ENCODE measurements at regions of chr4 and their contacts with region 1.

Region 1: DNA sequence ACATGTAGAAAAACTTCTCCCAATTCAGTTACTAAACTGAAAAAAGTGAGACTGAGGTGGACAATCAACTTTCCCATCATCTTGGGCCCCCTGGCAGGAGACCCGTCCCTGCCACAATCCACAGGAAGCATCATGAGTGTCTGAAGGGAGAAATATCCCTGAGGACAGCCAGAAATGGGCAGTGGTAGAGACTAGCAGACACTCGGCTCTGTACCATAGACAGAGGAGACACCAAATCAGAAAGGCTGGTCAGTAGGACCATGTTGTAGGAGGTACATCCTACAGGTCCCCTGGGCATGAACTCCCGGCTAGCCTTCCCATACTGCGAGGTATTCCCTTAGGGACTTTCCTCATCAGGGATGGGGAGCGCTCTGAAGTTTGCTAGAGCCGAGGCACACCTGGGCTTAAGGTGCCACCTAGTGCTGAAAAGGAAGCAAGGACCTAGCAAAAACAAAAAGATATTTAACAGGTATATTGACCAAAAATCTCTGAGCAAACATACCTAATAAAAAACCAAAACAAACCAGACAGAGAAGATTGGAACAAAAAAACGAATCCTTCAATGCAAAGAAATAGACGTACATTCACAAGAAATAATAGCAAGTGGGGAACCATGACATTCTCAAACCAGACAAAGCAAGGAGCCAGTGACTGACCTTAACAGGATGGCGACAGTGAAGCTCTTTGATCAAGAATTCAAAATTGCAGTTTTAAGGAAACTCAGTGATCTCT is 55.6 kb downstream of the HAUS3 start:
- DNase-seq: peak; percentile 49 to 58
- H3K4me3 ChIP-seq: no peak overlapping the region
- H3K4me3 Mint-ChIP-seq: no peak overlapping the region
- H3K27ac Mint-ChIP-seq: no peak overlapping the region
- H3K4me1 ChIP-seq: no peaks in the 10 kb centered on the region
- H3K4me1 Mint-ChIP-seq: no peaks in the 10 kb centered on the region
- H3K27me3 ChIP-seq: no peaks in the 10 kb centered on the region
- H3K27me3 Mint-ChIP-seq: no peaks in the 10 kb centered on the region
- CTCF ChIP-seq: peak; percentile 63

Region 2: DNA sequence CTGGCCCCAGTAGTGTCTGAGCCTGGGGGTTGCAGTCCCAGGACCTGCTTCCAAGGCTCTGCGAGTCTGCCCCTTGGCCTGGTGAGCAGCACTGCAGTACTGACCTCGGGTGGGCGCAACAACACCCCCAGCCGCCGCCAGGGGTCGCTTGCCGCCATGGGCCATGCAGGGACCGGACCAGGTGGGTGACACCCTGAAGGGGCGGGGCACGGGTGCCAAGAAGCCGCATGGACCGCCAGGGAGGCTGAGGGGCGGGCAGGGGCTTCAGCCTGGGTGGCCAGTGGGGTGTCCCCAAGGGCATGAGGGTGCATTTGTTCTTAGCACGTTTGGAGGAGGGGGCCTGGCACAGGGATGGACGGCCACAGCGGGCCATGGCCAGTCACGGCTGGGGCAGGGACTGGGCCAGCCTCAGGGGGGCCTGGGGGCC is 440.0 kb before region 1 on chr4:
- CTCF ChIA-PET with region 1: no interaction called
- POLR2A ChIA-PET with region 1: no interaction called
- intact Hi-C with region 1: loop called (anchors 5 kb)
- DNase-seq: peak; percentile 80 to 89
- H3K4me3 ChIP-seq: no peak overlapping the region
- H3K4me3 Mint-ChIP-seq: no peak overlapping the region
- H3K27ac Mint-ChIP-seq: no peak overlapping the region
- H3K4me1 ChIP-seq: 0 out of 2 replicates have a peak, but pooled peaks cover 5% of the 10 kb centered on the region
- H3K4me1 Mint-ChIP-seq: no peaks in the 10 kb centered on the region
- H3K27me3 ChIP-seq: no peaks in the 10 kb centered on the region
- H3K27me3 Mint-ChIP-seq: no peaks in the 10 kb centered on the region
- CTCF ChIP-seq: peak; percentile 66 to 85

Region 3: GRCh38 chr4:1910643-1911042 is 275.7 kb before region 1 on chr4:
- CTCF ChIA-PET with region 1: no interaction called
- POLR2A ChIA-PET with region 1: no interaction called
- intact Hi-C with region 1: loop called (anchors 1 kb)
- DNase-seq: peak in 1 of 2 experiments; percentile 67
- H3K4me3 ChIP-seq: no peak overlapping the region
- H3K4me3 Mint-ChIP-seq: no peak overlapping the region
- H3K27ac Mint-ChIP-seq: no peak overlapping the region
- H3K4me1 ChIP-seq: no peaks in the 10 kb centered on the region
- H3K4me1 Mint-ChIP-seq: peaks cover 23% of the 10 kb centered on the region
- H3K27me3 ChIP-seq: no peaks in the 10 kb centered on the region
- H3K27me3 Mint-ChIP-seq: no peaks in the 10 kb centered on the region
- CTCF ChIP-seq: peak; percentile 51 to 63

Region 4: GRCh38 chr4:1981251-1982058 is 204.8 kb before region 1 on chr4:
- CTCF ChIA-PET with region 1: no interaction called
- POLR2A ChIA-PET with region 1: no interaction called
- intact Hi-C with region 1: loop called (anchors 10 kb)
- DNase-seq: peak in 1 of 2 experiments; percentile 38
- H3K4me3 ChIP-seq: no peak overlapping the region
- H3K4me3 Mint-ChIP-seq: no peak overlapping the region
- H3K27ac Mint-ChIP-seq: peak overlapping the region; percentile 30
- H3K4me1 ChIP-seq: no peaks in the 10 kb centered on the region
- H3K4me1 Mint-ChIP-seq: no peaks in the 10 kb centered on the region
- H3K27me3 ChIP-seq: no peaks in the 10 kb centered on the region
- H3K27me3 Mint-ChIP-seq: no peaks in the 10 kb centered on the region
- CTCF ChIP-seq: no peak

Region 5: DNA sequence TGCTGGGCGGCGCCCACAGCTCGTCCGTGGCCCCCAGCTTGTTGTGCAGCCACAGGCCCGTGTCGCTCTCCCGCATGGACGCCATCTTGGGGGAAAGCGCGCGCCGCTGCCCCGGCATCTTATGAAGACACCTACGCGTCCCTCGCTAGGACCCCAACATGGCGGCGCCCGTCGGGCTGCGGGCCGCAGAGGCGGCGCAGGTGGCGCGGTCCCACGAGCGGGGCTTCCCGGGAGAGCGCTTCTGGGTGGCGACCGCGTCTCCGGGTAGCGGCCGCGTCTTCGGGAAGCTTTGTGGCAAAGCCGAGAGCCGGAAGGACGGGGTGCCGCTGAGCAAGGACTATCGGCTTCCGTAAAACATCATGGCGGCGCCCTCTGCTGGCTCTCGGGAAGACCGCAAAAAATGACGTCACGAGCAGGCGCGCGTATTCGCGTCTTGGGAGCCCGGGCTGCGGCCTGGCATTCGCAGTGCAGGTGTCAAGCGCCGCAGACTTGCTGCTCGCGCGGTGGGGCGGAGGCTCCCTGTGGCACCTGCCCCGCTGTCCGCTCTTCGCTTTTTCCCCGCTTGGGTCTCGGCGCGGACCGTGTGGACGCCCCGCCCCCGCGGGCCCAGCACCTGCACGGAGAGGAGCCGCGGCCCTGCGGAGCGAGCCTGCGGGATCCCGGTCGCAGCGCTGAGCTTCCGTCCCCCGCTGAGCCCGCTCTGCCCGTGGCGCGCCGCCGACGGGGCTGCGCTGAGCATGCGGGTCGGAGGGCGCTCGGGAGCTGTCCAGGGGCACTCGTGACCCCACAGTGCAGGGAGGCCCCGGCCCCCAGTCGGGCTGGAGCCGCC is 177.2 kb before region 1 on chr4 and contains the start of gene NELFA:
- CTCF ChIA-PET with region 1: no interaction called
- POLR2A ChIA-PET with region 1: no interaction called
- intact Hi-C with region 1: loop called (anchors 5 kb)
- DNase-seq: peak; percentile 95
- H3K4me3 ChIP-seq: peak within 1 kb of the TSS; percentile 100
- H3K4me3 Mint-ChIP-seq: peak within 1 kb of the TSS; percentile 79
- H3K27ac Mint-ChIP-seq: peak within 1 kb of the TSS; percentile 85
- H3K4me1 ChIP-seq: no peaks in the 10 kb centered on the region
- H3K4me1 Mint-ChIP-seq: peaks cover 6% of the 10 kb centered on the region
- H3K27me3 ChIP-seq: no peaks in the 10 kb centered on the region
- H3K27me3 Mint-ChIP-seq: no peaks in the 10 kb centered on the region
- CTCF ChIP-seq: peak; percentile 48 to 80
- total RNA-seq, gene NELFA: 47.7 and 53.0 TPM in 2 replicates

Region 6: GRCh38 chr4:2041234-2042130 is 144.8 kb before region 1 on chr4:
- CTCF ChIA-PET with region 1: no interaction called
- POLR2A ChIA-PET with region 1: no interaction called
- intact Hi-C with region 1: loop called (anchors 5 kb)
- DNase-seq: peak; percentile 86 to 88
- H3K4me3 ChIP-seq: peak overlapping the region; percentile 87
- H3K4me3 Mint-ChIP-seq: peak overlapping the region; percentile 85
- H3K27ac Mint-ChIP-seq: peak overlapping the region; percentile 69
- H3K4me1 ChIP-seq: peaks cover 4% of the 10 kb centered on the region; the same call in 1 of the 2 replicates
- H3K4me1 Mint-ChIP-seq: peaks cover 5% of the 10 kb centered on the region
- H3K27me3 ChIP-seq: no peaks in the 10 kb centered on the region
- H3K27me3 Mint-ChIP-seq: no peaks in the 10 kb centered on the region
- CTCF ChIP-seq: no peak

Region 7: DNA sequence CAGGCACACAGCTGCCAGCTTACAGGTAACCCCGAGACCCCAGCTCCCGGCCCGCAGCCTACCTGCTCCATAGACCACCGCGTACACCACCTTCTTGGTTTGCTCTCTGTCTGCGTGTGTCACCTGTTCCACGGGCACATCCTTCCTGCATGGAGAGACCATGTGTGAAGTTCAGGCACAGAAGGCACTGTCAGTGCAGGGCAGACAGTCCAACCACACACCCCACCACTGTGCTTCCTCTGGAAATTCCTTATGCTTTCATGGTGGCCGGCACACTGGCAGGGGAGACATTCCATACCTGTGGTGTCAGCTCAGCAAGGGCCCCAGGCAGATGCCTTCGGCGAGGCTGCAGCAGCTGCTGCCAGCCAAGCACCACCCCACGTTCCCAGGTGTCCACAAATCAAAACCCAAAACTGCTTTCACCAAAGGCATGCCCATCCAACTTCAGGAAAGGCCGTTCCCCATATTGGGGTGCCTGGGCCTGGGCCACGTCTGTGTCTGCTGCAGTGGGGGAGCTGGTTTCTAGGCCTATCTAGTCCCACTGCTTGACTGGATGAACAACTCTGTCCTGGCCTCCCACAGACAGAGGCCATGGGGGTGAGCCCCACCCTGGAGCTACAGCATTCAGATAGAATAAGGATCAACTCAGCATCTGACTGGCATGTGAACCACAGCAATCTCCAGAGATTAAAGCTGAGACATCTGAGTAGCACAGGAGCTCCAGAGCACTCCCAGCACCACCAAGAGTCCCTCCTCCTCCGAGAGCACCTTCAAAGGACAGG is 90.3 kb before region 1 on chr4:
- CTCF ChIA-PET with region 1: no interaction called
- POLR2A ChIA-PET with region 1: no interaction called
- intact Hi-C with region 1: loop called (anchors 10 kb)
- DNase-seq: no peak
- H3K4me3 ChIP-seq: no peak overlapping the region
- H3K4me3 Mint-ChIP-seq: no peak overlapping the region
- H3K27ac Mint-ChIP-seq: no peak overlapping the region
- H3K4me1 ChIP-seq: no peaks in the 10 kb centered on the region
- H3K4me1 Mint-ChIP-seq: no peaks in the 10 kb centered on the region
- H3K27me3 ChIP-seq: no peaks in the 10 kb centered on the region
- H3K27me3 Mint-ChIP-seq: no peaks in the 10 kb centered on the region
- CTCF ChIP-seq: no peak

Region 8: GRCh38 chr4:2689825-2690700 is 503.8 kb after region 1 on chr4:
- CTCF ChIA-PET with region 1: no interaction called
- POLR2A ChIA-PET with region 1: no interaction called
- intact Hi-C with region 1: no loop called
- DNase-seq: no peak
- H3K4me3 ChIP-seq: no peak overlapping the region
- H3K4me3 Mint-ChIP-seq: no peak overlapping the region
- H3K27ac Mint-ChIP-seq: no peak overlapping the region
- H3K4me1 ChIP-seq: no peaks in the 10 kb centered on the region
- H3K4me1 Mint-ChIP-seq: no peaks in the 10 kb centered on the region
- H3K27me3 ChIP-seq: no peaks in the 10 kb centered on the region
- H3K27me3 Mint-ChIP-seq: no peaks in the 10 kb centered on the region
- CTCF ChIP-seq: no peak